Transverse colon (tissue), 4 donors: ENCODE measurements at regions of chr7 and their contacts with region 1.

Region 1: GRCh38 chr7:147638566-147638965 is 952.0 kb upstream of the C7orf33 start:
- DNase-seq: no peak
- H3K4me3 ChIP-seq: no peak overlapping the region
- H3K27ac ChIP-seq: no peak overlapping the region
- H3K4me1 ChIP-seq: no peaks in the 10 kb centered on the region
- H3K27me3 ChIP-seq: no peaks in the 10 kb centered on the region
- CTCF ChIP-seq: no peak
- EP300 ChIP-seq: no peak
- POLR2A ChIP-seq: no peak

Region 2: GRCh38 chr7:146768957-146769356 is 869.6 kb before region 1 on chr7:
- in situ Hi-C with region 1: no loop called
- intact Hi-C with region 1: no loop called
- DNase-seq: no peak
- H3K4me3 ChIP-seq: no peak overlapping the region
- H3K27ac ChIP-seq: no peak overlapping the region
- H3K4me1 ChIP-seq: no peaks in the 10 kb centered on the region
- H3K27me3 ChIP-seq: no peaks in the 10 kb centered on the region
- CTCF ChIP-seq: no peak
- EP300 ChIP-seq: no peak
- POLR2A ChIP-seq: no peak

Region 3: DNA sequence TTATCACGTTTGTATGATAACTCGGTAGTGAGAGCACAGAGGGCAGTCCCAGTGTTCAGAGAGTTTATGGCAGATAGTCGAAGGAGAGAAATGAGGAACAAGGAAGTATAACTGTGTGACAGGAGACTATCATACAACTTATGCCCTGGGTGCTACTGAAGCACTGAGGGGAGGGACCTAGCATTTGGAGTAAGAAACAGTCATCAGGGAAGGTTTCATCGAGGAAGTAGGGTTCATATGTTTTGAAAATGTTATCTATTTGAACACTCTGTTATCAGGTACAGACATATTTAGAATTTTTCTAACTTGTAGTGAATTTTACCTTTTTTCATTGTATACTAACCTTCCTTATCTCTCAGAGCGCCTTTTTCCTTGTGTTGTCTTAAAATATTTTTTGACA is 262.4 kb before region 1 on chr7:
- in situ Hi-C with region 1: no loop called
- intact Hi-C with region 1: no loop called
- DNase-seq: no peak
- H3K4me3 ChIP-seq: no peak overlapping the region
- H3K27ac ChIP-seq: no peak overlapping the region
- H3K4me1 ChIP-seq: no peaks in the 10 kb centered on the region
- H3K27me3 ChIP-seq: no peaks in the 10 kb centered on the region
- CTCF ChIP-seq: no peak
- EP300 ChIP-seq: no peak
- POLR2A ChIP-seq: no peak

Region 4: DNA sequence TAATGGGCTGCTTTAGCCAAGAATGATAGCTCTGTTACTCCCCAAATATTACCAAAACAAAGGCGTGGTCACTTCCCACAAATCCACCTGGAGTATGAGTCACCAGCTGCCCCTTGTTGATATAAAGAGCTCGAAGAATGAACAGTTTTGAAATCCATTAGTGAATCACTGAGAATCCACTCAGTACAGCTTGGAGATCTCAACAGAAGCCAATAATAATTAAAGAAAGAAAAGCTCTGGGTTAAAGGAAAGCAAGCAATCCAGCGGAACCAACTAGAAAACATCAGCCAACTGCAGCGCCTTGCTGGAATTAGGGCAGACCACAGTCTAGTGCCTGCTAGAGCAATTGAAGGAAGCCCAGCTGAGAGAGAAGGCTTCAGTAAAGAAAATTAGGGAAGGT is 376.0 kb after region 1 on chr7:
- in situ Hi-C with region 1: no loop called
- intact Hi-C with region 1: no loop called
- DNase-seq: no peak
- H3K4me3 ChIP-seq: no peak overlapping the region
- H3K27ac ChIP-seq: no peak overlapping the region
- H3K4me1 ChIP-seq: no peaks in the 10 kb centered on the region
- H3K27me3 ChIP-seq: no peaks in the 10 kb centered on the region
- CTCF ChIP-seq: no peak
- EP300 ChIP-seq: no peak
- POLR2A ChIP-seq: no peak

Region 5: DNA sequence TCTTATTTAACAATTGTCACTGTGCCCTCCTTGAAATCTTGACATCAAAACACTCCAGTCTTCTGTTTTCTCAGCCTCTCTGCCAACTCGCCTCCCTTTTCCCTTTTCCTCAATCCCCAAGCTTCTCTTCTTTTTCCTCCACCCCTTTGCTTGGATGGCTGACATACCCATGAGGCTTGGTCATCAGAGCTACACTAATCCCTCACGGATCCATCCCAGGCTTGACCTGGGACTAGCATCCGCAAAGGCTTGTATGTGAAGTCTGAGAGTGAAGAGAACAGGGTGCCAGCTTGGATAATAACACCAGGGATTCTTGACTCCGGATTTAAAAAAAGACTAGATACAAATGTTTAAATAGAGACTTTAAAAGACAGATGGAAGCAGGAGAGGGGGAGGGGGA is 523.2 kb after region 1 on chr7:
- in situ Hi-C with region 1: no loop called
- intact Hi-C with region 1: loop called (anchors 2 kb)
- DNase-seq: no peak
- H3K4me3 ChIP-seq: no peak overlapping the region
- H3K27ac ChIP-seq: no peak overlapping the region
- H3K4me1 ChIP-seq: no peaks in the 10 kb centered on the region
- H3K27me3 ChIP-seq: no peaks in the 10 kb centered on the region
- CTCF ChIP-seq: no peak
- EP300 ChIP-seq: no peak
- POLR2A ChIP-seq: no peak